Activated naive CD4-positive, alpha-beta T cell treated with anti-CD3 and anti-CD28 coated beads for 36 hours (primary cell): ENCODE measurements at regions of chr9 and their contacts with region 1.

Region 1: GRCh38 chr9:101727612-101728524 is 10.6 kb downstream of the GRIN3A start:
- DNase-seq: peak; percentile 40
- H3K4me3 Mint-ChIP-seq: no peak overlapping the region
- H3K27ac Mint-ChIP-seq: no peak overlapping the region
- H3K4me1 Mint-ChIP-seq: no peaks in the 10 kb centered on the region
- H3K27me3 Mint-ChIP-seq: peaks cover 10% of the 10 kb centered on the region

Region 2: GRCh38 chr9:101705135-101705661 is 22.7 kb before region 1 on chr9:
- CTCF ChIA-PET with region 1: interaction called, 3 read pairs
- intact Hi-C with region 1: loop called (anchors 1 kb)
- DNase-seq: peak; percentile 65
- H3K4me3 Mint-ChIP-seq: peak overlapping the region; percentile 72
- H3K27ac Mint-ChIP-seq: no peak overlapping the region
- H3K4me1 Mint-ChIP-seq: peaks cover 7% of the 10 kb centered on the region
- H3K27me3 Mint-ChIP-seq: no peaks in the 10 kb centered on the region